IMR-90 (cell line): ENCODE measurements at regions of chr9 and their contacts with region 1.

Region 1: DNA sequence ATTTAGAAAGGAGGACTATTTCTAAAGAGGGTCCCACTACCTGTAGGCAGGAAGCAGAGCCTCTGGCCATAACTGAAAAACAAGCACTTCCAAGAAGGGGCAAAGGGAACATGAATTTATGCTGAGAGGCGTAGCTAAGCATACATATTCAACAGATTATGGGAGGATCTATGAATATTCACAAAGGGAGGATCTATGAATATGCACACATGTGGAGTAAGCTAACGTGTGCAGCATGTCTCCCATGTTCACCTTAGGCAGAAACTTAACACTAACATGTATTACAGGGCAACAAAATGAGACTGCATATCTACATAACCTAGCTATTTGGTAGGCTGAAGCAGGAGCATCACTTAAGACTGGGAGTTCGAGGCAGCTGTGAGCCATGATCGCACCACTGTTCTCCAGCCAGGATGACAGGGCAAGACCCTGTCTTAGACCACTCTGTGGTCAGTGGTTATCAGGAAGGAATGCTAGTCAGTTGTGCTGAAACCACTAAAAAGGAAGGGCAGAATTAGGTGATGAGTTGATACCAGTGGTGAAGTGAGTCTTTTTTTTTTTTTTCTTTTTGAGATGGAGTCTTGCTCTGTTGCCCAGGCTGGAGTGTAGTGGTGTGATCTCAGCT is 20.8 kb downstream of the FXN start:
- DNase-seq: no peak
- ATAC-seq: no peak
- H3K4me3 ChIP-seq: no peak overlapping the region
- H3K27ac ChIP-seq: no peak overlapping the region
- H3K4me1 ChIP-seq: peaks cover 2% of the 10 kb centered on the region; the same call in 1 of the 2 replicates
- H3K27me3 ChIP-seq: no peaks in the 10 kb centered on the region
- CTCF ChIP-seq: no peak
- POLR2A ChIP-seq: no peak
- RAD21 ChIP-seq: no peak

Region 2: DNA sequence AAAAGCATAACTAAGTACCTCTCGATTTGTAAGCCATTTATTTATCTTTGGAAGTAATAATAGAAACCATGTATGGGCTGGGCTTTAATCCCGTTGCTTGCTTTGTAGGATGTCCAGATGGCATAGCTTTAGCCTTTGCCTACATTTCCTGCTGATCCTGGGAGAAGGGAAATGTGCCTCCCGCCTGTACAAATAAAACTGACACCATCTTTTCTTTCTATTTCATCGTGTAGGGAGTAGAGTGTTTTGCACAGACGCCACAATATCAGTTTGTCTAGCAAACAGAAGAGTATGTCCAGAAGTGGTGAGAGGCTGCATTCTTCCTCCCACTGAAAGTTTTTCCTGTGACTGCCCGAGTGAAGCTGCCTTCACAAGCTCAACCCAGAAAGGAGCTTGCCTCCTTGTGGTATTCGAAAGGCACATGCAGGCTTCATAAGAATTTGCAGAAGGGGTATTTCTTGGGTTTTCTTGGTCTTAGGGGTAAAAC is 93.1 kb after region 1 on chr9:
- CTCF ChIA-PET with region 1: no interaction called
- POLR2A ChIA-PET with region 1: no interaction called
- dilution Hi-C with region 1: no loop called
- in situ Hi-C with region 1: no loop called
- intact Hi-C with region 1: loop called (anchors 1 kb)
- DNase-seq: peak; percentile 87
- ATAC-seq: peak; percentile 95
- H3K4me3 ChIP-seq: peak overlapping the region; percentile 1; the same call in 1 of the 2 replicates
- H3K27ac ChIP-seq: no peak overlapping the region; the same call in 1 of the 2 replicates
- H3K4me1 ChIP-seq: no peaks in the 10 kb centered on the region
- H3K27me3 ChIP-seq: no peaks in the 10 kb centered on the region
- CTCF ChIP-seq: peak; percentile 60
- POLR2A ChIP-seq: no peak
- RAD21 ChIP-seq: peak; percentile 72

Region 3: DNA sequence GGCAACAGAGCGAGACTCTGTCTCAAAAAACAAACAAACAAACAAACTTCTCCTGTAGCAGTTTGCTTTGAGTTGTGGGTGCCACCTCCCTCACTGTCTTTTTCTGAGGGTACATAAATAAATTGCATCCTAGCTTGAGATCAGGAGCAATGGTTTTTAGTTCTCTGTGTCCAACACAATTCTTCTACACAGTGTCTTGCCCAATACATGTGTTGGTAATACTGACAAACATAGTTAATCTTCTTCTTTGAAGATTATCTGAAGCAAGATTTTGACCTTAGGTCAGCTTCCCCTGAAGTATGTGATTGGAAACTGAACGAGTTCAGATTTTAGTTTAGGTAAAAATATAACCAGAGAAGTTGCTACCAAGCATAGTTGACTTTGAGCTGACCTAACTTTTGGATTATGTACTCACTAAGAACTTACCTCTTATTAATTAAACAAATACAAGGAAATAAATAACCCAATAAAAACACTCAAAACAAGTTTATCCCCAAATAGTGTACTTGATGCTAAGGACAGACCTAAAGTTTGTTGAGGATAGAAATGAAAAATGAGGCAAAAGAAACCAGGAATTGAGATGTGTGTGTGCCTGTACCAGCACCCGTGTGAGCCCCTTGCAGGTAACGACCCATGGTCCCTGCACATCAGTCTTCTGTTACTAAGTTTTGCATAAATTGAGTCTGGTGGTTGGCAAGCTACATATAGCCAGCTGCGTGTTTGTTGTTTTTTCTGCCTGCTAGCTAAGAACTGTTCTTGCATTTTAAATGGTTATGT is 134.0 kb after region 1 on chr9:
- CTCF ChIA-PET with region 1: interaction called, 47 read pairs
- POLR2A ChIA-PET with region 1: no interaction called
- dilution Hi-C with region 1: no loop called
- in situ Hi-C with region 1: loop called (anchors 5 kb)
- intact Hi-C with region 1: loop called (anchors 1 kb)
- DNase-seq: no peak
- ATAC-seq: no peak
- H3K4me3 ChIP-seq: no peak overlapping the region
- H3K27ac ChIP-seq: no peak overlapping the region
- H3K4me1 ChIP-seq: peaks cover 14% of the 10 kb centered on the region
- H3K27me3 ChIP-seq: no peaks in the 10 kb centered on the region
- CTCF ChIP-seq: no peak
- POLR2A ChIP-seq: no peak
- RAD21 ChIP-seq: no peak

Region 4: GRCh38 chr9:69199769-69200470 is 143.6 kb after region 1 on chr9:
- CTCF ChIA-PET with region 1: interaction called, 47 read pairs
- POLR2A ChIA-PET with region 1: no interaction called
- dilution Hi-C with region 1: no loop called
- in situ Hi-C with region 1: loop called (anchors 5 kb)
- intact Hi-C with region 1: no loop called
- DNase-seq: peak; percentile 55
- ATAC-seq: no peak
- H3K4me3 ChIP-seq: no peak overlapping the region
- H3K27ac ChIP-seq: no peak overlapping the region
- H3K4me1 ChIP-seq: peaks cover 3% of the 10 kb centered on the region
- H3K27me3 ChIP-seq: no peaks in the 10 kb centered on the region
- CTCF ChIP-seq: 0 out of 2 replicates have a peak, but pooled peaks have one; percentile 15
- POLR2A ChIP-seq: no peak
- RAD21 ChIP-seq: peak; percentile 38; the same call in 1 of the 2 replicates

Region 5: GRCh38 chr9:69223605-69224004 is 167.3 kb after region 1 on chr9:
- CTCF ChIA-PET with region 1: interaction called, 4 read pairs
- POLR2A ChIA-PET with region 1: interaction called, 10 read pairs
- dilution Hi-C with region 1: no loop called
- in situ Hi-C with region 1: no loop called
- intact Hi-C with region 1: no loop called
- DNase-seq: peak; percentile 70
- ATAC-seq: peak; percentile 99
- H3K4me3 ChIP-seq: no peak overlapping the region
- H3K27ac ChIP-seq: no peak overlapping the region
- H3K4me1 ChIP-seq: no peaks in the 10 kb centered on the region
- H3K27me3 ChIP-seq: no peaks in the 10 kb centered on the region
- CTCF ChIP-seq: peak; percentile 63
- POLR2A ChIP-seq: no peak
- RAD21 ChIP-seq: peak; percentile 44

Region 6: GRCh38 chr9:69376651-69377050 is 320.3 kb after region 1 on chr9:
- CTCF ChIA-PET with region 1: no interaction called
- POLR2A ChIA-PET with region 1: no interaction called
- dilution Hi-C with region 1: no loop called
- in situ Hi-C with region 1: no loop called
- intact Hi-C with region 1: loop called (anchors 10 kb)
- DNase-seq: peak; percentile 92
- ATAC-seq: peak; percentile 87
- H3K4me3 ChIP-seq: no peak overlapping the region
- H3K27ac ChIP-seq: no peak overlapping the region
- H3K4me1 ChIP-seq: peaks cover 3% of the 10 kb centered on the region
- H3K27me3 ChIP-seq: no peaks in the 10 kb centered on the region; the same call in 1 of the 2 replicates
- CTCF ChIP-seq: no peak
- POLR2A ChIP-seq: no peak
- RAD21 ChIP-seq: no peak

Region 7: GRCh38 chr9:69549310-69550202 is 493.3 kb after region 1 on chr9:
- CTCF ChIA-PET with region 1: no interaction called
- POLR2A ChIA-PET with region 1: no interaction called
- dilution Hi-C with region 1: no loop called
- in situ Hi-C with region 1: loop called (anchors 25 kb)
- intact Hi-C with region 1: loop called (anchors 5 kb)
- DNase-seq: peak; percentile 61
- ATAC-seq: peak; percentile 93
- H3K4me3 ChIP-seq: no peak overlapping the region
- H3K27ac ChIP-seq: no peak overlapping the region
- H3K4me1 ChIP-seq: no peaks in the 10 kb centered on the region
- H3K27me3 ChIP-seq: no peaks in the 10 kb centered on the region
- CTCF ChIP-seq: peak; percentile 81
- POLR2A ChIP-seq: no peak
- RAD21 ChIP-seq: peak; percentile 77